ENCODE measurements at regions of chr19 and their contacts with region 1.

Region 1: DNA sequence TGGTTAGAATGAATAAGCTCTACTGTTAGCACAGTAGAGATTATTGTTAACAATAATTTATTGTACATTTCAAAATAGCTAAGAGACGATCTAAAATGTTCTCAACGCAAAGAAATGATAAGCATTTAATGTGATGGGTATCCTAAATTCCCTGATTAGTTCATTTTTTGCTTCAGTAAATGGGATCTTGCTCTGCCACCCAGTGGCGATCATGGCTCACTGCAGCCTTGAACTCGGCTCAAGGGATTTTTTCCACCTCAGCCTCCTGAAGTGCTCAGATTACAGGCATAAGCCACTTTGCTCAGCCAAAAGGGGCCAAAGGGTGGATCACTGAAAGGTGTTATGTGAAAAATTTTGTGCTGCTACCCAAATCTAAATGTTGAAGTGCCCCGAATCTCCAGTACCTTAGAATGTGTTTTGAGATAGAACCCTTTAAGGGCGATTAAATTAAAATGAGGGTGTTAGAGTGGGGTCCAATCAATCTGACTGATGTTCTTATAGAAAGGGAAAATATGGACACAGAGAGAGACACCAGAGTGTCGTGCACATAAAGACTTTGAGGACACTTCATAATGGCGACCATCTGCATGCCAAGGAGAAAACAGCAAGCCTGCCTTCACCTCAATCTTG is 31.5 kb upstream of the ZNF766 start:
- DNase-seq: peak; percentile 53
- ATAC-seq: peak; percentile 80 to 85
- H3K4me3 ChIP-seq: no peak overlapping the region
- H3K27ac ChIP-seq: no peak overlapping the region
- H3K4me1 ChIP-seq: no peaks in the 10 kb centered on the region
- H3K27me3 ChIP-seq: no peaks in the 10 kb centered on the region
- CTCF ChIP-seq: peak; percentile 90

Region 2: GRCh38 chr19:52139252-52140031 is 98.4 kb before region 1 on chr19 and contains the start of gene ZNF616:
- intact Hi-C with region 1: loop called (anchors 10 kb)
- DNase-seq: peak; percentile 97
- ATAC-seq: peak; percentile 96 to 100
- H3K4me3 ChIP-seq: peak within 1 kb of the TSS; percentile 98
- H3K27ac ChIP-seq: peak within 1 kb of the TSS; percentile 95
- H3K4me1 ChIP-seq: peaks cover 23% of the 10 kb centered on the region
- H3K27me3 ChIP-seq: no peaks in the 10 kb centered on the region
- CTCF ChIP-seq: peak; percentile 82
- total RNA-seq, gene ZNF616: 13.4 TPM

Region 3: GRCh38 chr19:52189735-52190486 is 48.0 kb before region 1 on chr19 and contains the start of gene PPP2R1A:
- intact Hi-C with region 1: no loop called
- DNase-seq: peak; percentile 100
- ATAC-seq: peak; percentile 96 to 97
- H3K4me3 ChIP-seq: peak within 1 kb of the TSS; percentile 87
- H3K27ac ChIP-seq: peak within 1 kb of the TSS; percentile 99
- H3K4me1 ChIP-seq: peaks cover 36% of the 10 kb centered on the region
- H3K27me3 ChIP-seq: no peaks in the 10 kb centered on the region
- CTCF ChIP-seq: no peak
- total RNA-seq, gene PPP2R1A: 154 TPM